CD14-positive monocyte (primary cell): ENCODE measurements at regions of chr3 and their contacts with region 1.

Region 1: GRCh38 chr3:100260685-100261484 is at the start of gene TBC1D23:
- DNase-seq: peak; percentile 99 to 100 (median 99)
- H3K4me3 ChIP-seq: peak within 1 kb of the TSS; percentile 70 to 87 (median 87)
- H3K4me3 Mint-ChIP-seq: peak within 1 kb of the TSS; percentile 94 to 98
- H3K27ac ChIP-seq: peak within 1 kb of the TSS; percentile 88 to 97
- H3K27ac Mint-ChIP-seq: peak within 1 kb of the TSS; percentile 98 to 99 (median 98)
- H3K4me1 ChIP-seq: peaks cover 16 to 19% of the 10 kb centered on the region in 2 donors
- H3K4me1 Mint-ChIP-seq: peaks cover 38% of the 10 kb centered on the region
- H3K27me3 ChIP-seq: no peaks in the 10 kb centered on the region
- H3K27me3 Mint-ChIP-seq: peaks cover 0 to 2% (median 0%) of the 10 kb centered on the region in 3 donors
- CTCF ChIP-seq: no peak
- polyA plus RNA-seq, gene TBC1D23: 10.2 to 22.7 (median 12.2) TPM

Region 2: GRCh38 chr3:99833617-99834205 is 427.2 kb before region 1 on chr3:
- intact Hi-C with region 1: loop called (anchors 10 kb)
- DNase-seq: no peak
- H3K4me3 ChIP-seq: no peak overlapping the region
- H3K4me3 Mint-ChIP-seq: no peak overlapping the region
- H3K27ac ChIP-seq: no peak overlapping the region
- H3K27ac Mint-ChIP-seq: no peak overlapping the region
- H3K4me1 ChIP-seq: no peaks in the 10 kb centered on the region
- H3K4me1 Mint-ChIP-seq: no peaks in the 10 kb centered on the region
- H3K27me3 ChIP-seq: no peaks in the 10 kb centered on the region
- H3K27me3 Mint-ChIP-seq: no peaks in the 10 kb centered on the region
- CTCF ChIP-seq: no peak

Region 3: GRCh38 chr3:100073899-100074307 is 187.0 kb before region 1 on chr3:
- intact Hi-C with region 1: loop called in 1 of 2 experiments (anchors 10 kb)
- DNase-seq: peak; percentile 33 to 81 (median 73)
- H3K4me3 ChIP-seq: peak overlapping the region in 2 of 3 experiments; percentile 31 to 69
- H3K4me3 Mint-ChIP-seq: peak overlapping the region; percentile 50 to 87
- H3K27ac ChIP-seq: peak overlapping the region; percentile 9 to 79
- H3K27ac Mint-ChIP-seq: peak overlapping the region; percentile 78 to 90 (median 87)
- H3K4me1 ChIP-seq: peaks cover 42 to 48% of the 10 kb centered on the region in 2 donors
- H3K4me1 Mint-ChIP-seq: peaks cover 60% of the 10 kb centered on the region
- H3K27me3 ChIP-seq: no peaks in the 10 kb centered on the region
- H3K27me3 Mint-ChIP-seq: no peaks in the 10 kb centered on the region
- CTCF ChIP-seq: no peak

Region 4: GRCh38 chr3:100400780-100401673 is 140.1 kb after region 1 on chr3 and contains the starts of genes LNP1 and TOMM70:
- intact Hi-C with region 1: loop called in 1 of 2 experiments (anchors 5 kb)
- DNase-seq: peak; percentile 90 to 96 (median 92)
- H3K4me3 ChIP-seq: peak within 1 kb of the TSS; percentile 86 to 96 (median 91)
- H3K4me3 Mint-ChIP-seq: peak within 1 kb of the TSS; percentile 89 to 99
- H3K27ac ChIP-seq: peak within 1 kb of the TSS; percentile 85 to 86
- H3K27ac Mint-ChIP-seq: peak within 1 kb of the TSS; percentile 91 to 97 (median 96)
- H3K4me1 ChIP-seq: peaks cover 25 to 29% of the 10 kb centered on the region in 2 donors
- H3K4me1 Mint-ChIP-seq: peaks cover 40% of the 10 kb centered on the region
- H3K27me3 ChIP-seq: no peaks in the 10 kb centered on the region
- H3K27me3 Mint-ChIP-seq: peaks cover 0 to 2% (median 0%) of the 10 kb centered on the region in 3 donors
- CTCF ChIP-seq: no peak
- polyA plus RNA-seq, gene LNP1: 0.07 to 0.26 (median 0.08) TPM
- polyA plus RNA-seq, gene TOMM70: 4.9 to 6.3 (median 6.3) TPM